MCF 10A (cell line): ENCODE measurements at regions of chr17 and their contacts with region 1.

Region 1: DNA sequence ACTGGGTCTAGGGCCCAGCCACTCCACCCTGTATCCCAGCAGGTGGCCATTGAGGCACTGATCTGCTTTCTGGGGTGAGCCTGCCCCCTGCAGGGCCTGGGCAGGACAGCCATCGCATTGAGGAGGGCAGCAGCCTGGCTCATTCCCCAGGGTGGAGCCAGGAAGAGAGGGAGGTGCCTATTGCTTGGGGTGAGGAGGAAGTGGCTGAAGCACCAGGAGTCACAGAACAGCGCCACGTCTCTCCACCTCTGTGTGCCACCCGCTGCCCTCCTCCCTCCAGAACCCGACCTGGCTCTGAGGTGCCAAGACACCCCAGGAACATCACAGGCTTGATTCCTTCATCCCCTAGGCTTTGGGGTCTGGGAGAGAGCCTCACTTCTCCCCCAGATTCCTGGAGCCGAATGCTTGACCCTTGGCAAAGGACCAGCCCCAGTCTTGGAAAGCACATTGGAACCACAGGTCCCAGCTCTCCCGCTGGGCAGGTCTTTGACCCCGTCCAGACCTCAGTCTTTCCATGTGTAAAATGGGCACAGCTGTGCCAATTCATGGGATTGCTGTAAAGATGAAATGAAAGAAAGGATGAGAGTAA is 7.2 kb upstream of the KRT36 start:
- DNase-seq: peak; percentile 94
- H3K4me3 Mint-ChIP-seq: no peak overlapping the region
- H3K27ac Mint-ChIP-seq: peak overlapping the region; percentile 68
- H3K4me1 Mint-ChIP-seq: peaks cover 25% of the 10 kb centered on the region
- H3K27me3 Mint-ChIP-seq: no peaks in the 10 kb centered on the region
- CTCF ChIP-seq: peak; percentile 88

Region 2: GRCh38 chr17:41322094-41322902 is 174.6 kb before region 1 on chr17:
- CTCF ChIA-PET with region 1: interaction called, 12 read pairs
- POLR2A ChIA-PET with region 1: no interaction called
- intact Hi-C with region 1: loop called (anchors 1 kb)
- DNase-seq: peak; percentile 61
- H3K4me3 Mint-ChIP-seq: no peak overlapping the region
- H3K27ac Mint-ChIP-seq: no peak overlapping the region
- H3K4me1 Mint-ChIP-seq: no peaks in the 10 kb centered on the region
- H3K27me3 Mint-ChIP-seq: no peaks in the 10 kb centered on the region
- CTCF ChIP-seq: peak; percentile 76